Aorta (tissue), 5 donors: ENCODE measurements at regions of chr13 and their contacts with region 1.

Region 1: DNA sequence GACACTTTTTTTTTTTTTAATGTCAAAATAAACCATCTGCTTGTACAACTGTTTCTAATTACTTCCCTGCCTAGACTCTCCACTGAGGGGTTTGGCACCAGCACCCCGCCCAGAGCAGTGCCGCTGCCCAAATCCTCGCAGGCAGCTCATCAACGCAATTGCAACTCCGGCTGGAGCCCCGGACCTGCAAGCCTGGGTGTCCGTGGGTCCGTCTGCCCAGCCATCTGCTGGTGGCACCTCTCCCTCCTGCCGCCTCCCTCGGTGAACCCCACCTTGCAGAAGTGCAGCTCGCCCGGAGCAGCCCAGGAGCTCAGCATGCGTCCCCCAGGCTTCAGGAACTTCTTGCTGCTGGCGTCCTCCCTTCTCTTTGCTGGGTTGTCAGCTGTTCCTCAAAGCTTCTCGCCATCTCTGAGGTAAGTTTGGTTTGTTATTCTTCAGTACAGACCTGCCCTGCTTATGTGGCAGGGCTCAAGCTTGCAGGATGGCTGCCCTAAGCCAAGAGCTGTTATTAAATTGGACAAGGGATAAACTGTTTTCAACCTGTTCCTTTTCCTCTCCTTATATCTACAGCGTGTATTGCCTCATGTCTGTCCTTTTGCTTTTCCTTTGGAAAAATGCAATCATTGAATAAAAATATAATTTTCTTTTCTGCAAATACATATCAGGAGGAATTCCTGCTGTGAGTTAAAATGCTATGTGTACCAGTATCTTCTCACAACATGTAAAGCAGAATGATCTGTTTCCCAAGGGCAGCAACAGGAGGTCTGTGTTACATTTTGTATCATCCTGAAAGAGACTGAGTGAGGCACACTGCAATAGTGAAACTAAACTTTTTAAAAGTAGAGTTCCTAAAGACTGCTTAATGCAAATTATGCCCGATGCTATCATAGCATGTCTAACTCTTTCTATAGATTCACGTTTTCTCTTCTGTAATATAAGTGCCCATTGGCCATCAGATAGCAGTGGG is at the start of gene ITGBL1:
- DNase-seq: peak; percentile 60 to 80
- ATAC-seq: peak; percentile 49
- H3K4me3 ChIP-seq: peak within 1 kb of the TSS; percentile 55 to 63
- H3K27ac ChIP-seq: peak within 1 kb of the TSS; percentile 40 to 99
- H3K4me1 ChIP-seq: peaks cover 4 to 14% of the 10 kb centered on the region in 2 donors
- H3K27me3 ChIP-seq: no peaks in the 10 kb centered on the region
- total RNA-seq, gene ITGBL1: 110 to 121 TPM

Region 2: DNA sequence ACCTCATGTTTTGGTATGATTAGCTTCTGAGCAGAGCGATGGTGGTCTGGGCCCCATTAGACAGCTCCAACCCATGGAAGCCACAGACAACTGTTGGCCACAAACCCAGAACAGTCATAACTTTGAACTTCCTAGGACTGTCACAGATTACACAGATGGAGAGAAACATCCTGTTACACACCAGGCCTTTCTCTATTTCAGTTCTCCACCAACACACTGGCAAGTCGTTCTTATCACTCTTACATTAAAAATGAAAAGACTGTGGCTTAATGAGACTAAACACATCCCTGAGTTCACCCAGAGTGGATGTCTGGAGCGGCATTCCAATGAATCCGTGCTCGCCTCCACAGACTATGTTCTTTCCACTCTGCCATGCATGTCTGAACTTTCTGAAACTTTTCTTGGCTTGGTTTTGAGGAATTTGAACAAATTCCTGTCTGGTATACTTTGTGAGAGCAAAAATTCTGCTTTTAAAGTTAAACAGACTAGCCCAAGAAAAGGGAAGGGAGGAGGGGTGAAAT is 145.6 kb before region 1 on chr13:
- intact Hi-C with region 1: loop called (anchors 5 kb)
- DNase-seq: peak in 1 of 2 donors; percentile 53
- ATAC-seq: no peak
- H3K4me3 ChIP-seq: no peak overlapping the region
- H3K27ac ChIP-seq: peak overlapping the region; percentile 51 to 96
- H3K4me1 ChIP-seq: peaks cover 0 to 2% of the 10 kb centered on the region in 2 donors
- H3K27me3 ChIP-seq: no peaks in the 10 kb centered on the region

Region 3: GRCh38 chr13:101382086-101382485 is 70.7 kb before region 1 on chr13:
- intact Hi-C with region 1: loop called in 1 of 2 experiments (anchors 10 kb)
- DNase-seq: no peak
- ATAC-seq: no peak
- H3K4me3 ChIP-seq: no peak overlapping the region
- H3K27ac ChIP-seq: no peak overlapping the region
- H3K4me1 ChIP-seq: peaks cover 0 to 1% of the 10 kb centered on the region in 2 donors
- H3K27me3 ChIP-seq: no peaks in the 10 kb centered on the region